Heart left ventricle (tissue), 16 donors: ENCODE measurements at regions of chr13 and their contacts with region 1.

Region 1: GRCh38 chr13:97359181-97360057 is 74.5 kb upstream of the RAP2A start:
- DNase-seq: peak in 3 of 5 donors; percentile 38 to 51 (median 44)
- ATAC-seq: peak; percentile 83 to 89 (median 85)
- H3K4me3 ChIP-seq: no peak overlapping the region
- H3K27ac ChIP-seq: peak overlapping the region in 5 of 12 donors; percentile 4 to 40 (median 29)
- H3K4me1 ChIP-seq: peaks cover 5 to 42% (median 15%) of the 10 kb centered on the region in 12 donors
- H3K27me3 ChIP-seq: no peaks in the 10 kb centered on the region
- CTCF ChIP-seq: peak; percentile 80 to 92 (median 87)
- POLR2A ChIP-seq: no peak

Region 2: GRCh38 chr13:97018029-97018831 is 341.2 kb before region 1 on chr13:
- intact Hi-C with region 1: loop called in 7 of 10 experiments (anchors 5 to 10 kb)
- DNase-seq: peak in 2 of 5 donors; percentile 20 to 27
- ATAC-seq: peak; percentile 51 to 71 (median 59)
- H3K4me3 ChIP-seq: no peak overlapping the region
- H3K27ac ChIP-seq: no peak overlapping the region
- H3K4me1 ChIP-seq: peaks cover 0 to 5% (median 0%) of the 10 kb centered on the region in 12 donors
- H3K27me3 ChIP-seq: peaks cover 0 to 13% (median 0%) of the 10 kb centered on the region in 9 donors
- CTCF ChIP-seq: peak; percentile 83 to 93 (median 88)
- POLR2A ChIP-seq: no peak

Region 3: DNA sequence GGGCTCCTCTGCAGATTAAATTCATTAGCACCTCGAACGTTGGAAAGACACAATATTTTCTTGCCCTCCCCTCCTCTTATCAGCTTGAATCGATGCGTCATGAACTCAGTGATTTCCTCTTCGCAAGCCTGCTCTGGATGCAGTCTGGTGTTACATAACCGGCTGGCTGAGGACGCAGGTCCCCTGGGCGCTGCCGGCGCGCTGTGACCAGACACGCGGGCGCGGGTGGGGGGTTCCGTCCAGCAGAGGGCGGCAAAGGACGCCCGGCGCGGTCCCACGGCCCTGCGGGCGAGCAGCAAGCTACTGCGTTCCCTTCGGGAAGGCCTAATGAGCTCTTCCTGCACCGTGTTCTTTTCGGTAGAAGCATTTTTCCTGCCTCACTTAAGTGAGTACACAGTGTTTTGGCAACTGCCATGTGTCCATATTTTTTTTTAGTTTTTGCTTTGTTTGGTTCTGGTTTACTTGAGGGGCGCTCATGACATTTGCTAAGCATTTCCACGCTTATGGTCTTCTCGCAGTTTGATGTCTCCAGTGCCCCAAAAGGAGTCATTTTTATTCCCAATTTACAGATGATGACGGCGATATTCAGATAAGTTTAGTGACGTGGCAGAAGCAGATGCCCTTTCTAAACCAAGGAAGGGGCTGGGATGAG is 249.5 kb before region 1 on chr13:
- intact Hi-C with region 1: loop called in 6 of 10 experiments (anchors 1 to 5 kb)
- DNase-seq: peak; percentile 90 to 96 (median 93)
- ATAC-seq: peak; percentile 95 to 98 (median 98)
- H3K4me3 ChIP-seq: peak overlapping the region in 8 of 12 donors; percentile 15 to 52 (median 20)
- H3K27ac ChIP-seq: peak overlapping the region in 6 of 12 donors; percentile 9 to 77 (median 46)
- H3K4me1 ChIP-seq: peaks cover 0 to 31% (median 22%) of the 10 kb centered on the region in 12 donors
- H3K27me3 ChIP-seq: peaks cover 0 to 10% (median 0%) of the 10 kb centered on the region in 9 donors
- CTCF ChIP-seq: peak; percentile 96 to 100 (median 98)
- POLR2A ChIP-seq: no peak

Region 4: GRCh38 chr13:97328222-97328790 is 31.1 kb before region 1 on chr13:
- intact Hi-C with region 1: no loop called
- DNase-seq: no peak
- ATAC-seq: peak; percentile 28 to 45 (median 44)
- H3K4me3 ChIP-seq: no peak overlapping the region
- H3K27ac ChIP-seq: peak overlapping the region in 4 of 12 donors; percentile 24 to 71 (median 40)
- H3K4me1 ChIP-seq: peaks cover 0 to 89% (median 40%) of the 10 kb centered on the region in 12 donors
- H3K27me3 ChIP-seq: no peaks in the 10 kb centered on the region
- CTCF ChIP-seq: no peak
- POLR2A ChIP-seq: no peak

Region 5: GRCh38 chr13:97344265-97345175 is 14.9 kb before region 1 on chr13:
- intact Hi-C with region 1: loop called in 1 of 10 experiments (anchors 2 kb)
- DNase-seq: peak in 4 of 5 donors; percentile 51 to 71 (median 58)
- ATAC-seq: peak; percentile 63 to 83 (median 81)
- H3K4me3 ChIP-seq: no peak overlapping the region
- H3K27ac ChIP-seq: peak overlapping the region in 6 of 12 donors; percentile 2 to 50 (median 17)
- H3K4me1 ChIP-seq: peaks cover 6 to 52% (median 21%) of the 10 kb centered on the region in 12 donors
- H3K27me3 ChIP-seq: no peaks in the 10 kb centered on the region
- CTCF ChIP-seq: peak; percentile 58 to 82 (median 74)
- POLR2A ChIP-seq: no peak

Region 6: GRCh38 chr13:97567510-97568243 is 208.3 kb after region 1 on chr13:
- intact Hi-C with region 1: loop called in 4 of 10 experiments (anchors 10 kb)
- DNase-seq: no peak
- ATAC-seq: peak in 2 of 4 donors; percentile 36 to 48
- H3K4me3 ChIP-seq: no peak overlapping the region
- H3K27ac ChIP-seq: no peak overlapping the region
- H3K4me1 ChIP-seq: peaks cover 0 to 14% (median 4%) of the 10 kb centered on the region in 12 donors
- H3K27me3 ChIP-seq: peaks cover 0 to 6% (median 0%) of the 10 kb centered on the region in 9 donors
- CTCF ChIP-seq: no peak
- POLR2A ChIP-seq: no peak

Region 7: GRCh38 chr13:97659602-97660001 is 300.2 kb after region 1 on chr13:
- intact Hi-C with region 1: loop called in 3 of 10 experiments (anchors 10 kb)
- DNase-seq: peak in 1 of 5 donors; percentile 11
- ATAC-seq: peak in 3 of 4 donors; percentile 50 to 62 (median 52)
- H3K4me3 ChIP-seq: no peak overlapping the region
- H3K27ac ChIP-seq: no peak overlapping the region
- H3K4me1 ChIP-seq: peaks cover 0 to 13% (median 0%) of the 10 kb centered on the region in 12 donors
- H3K27me3 ChIP-seq: no peaks in the 10 kb centered on the region
- CTCF ChIP-seq: peak; percentile 20 to 60 (median 44)
- POLR2A ChIP-seq: no peak